Activated B cell treated with CpG ODN at 0.5 μM for 24 hours (primary cell): ENCODE measurements at regions of chr4 and their contacts with region 1.

Region 1: DNA sequence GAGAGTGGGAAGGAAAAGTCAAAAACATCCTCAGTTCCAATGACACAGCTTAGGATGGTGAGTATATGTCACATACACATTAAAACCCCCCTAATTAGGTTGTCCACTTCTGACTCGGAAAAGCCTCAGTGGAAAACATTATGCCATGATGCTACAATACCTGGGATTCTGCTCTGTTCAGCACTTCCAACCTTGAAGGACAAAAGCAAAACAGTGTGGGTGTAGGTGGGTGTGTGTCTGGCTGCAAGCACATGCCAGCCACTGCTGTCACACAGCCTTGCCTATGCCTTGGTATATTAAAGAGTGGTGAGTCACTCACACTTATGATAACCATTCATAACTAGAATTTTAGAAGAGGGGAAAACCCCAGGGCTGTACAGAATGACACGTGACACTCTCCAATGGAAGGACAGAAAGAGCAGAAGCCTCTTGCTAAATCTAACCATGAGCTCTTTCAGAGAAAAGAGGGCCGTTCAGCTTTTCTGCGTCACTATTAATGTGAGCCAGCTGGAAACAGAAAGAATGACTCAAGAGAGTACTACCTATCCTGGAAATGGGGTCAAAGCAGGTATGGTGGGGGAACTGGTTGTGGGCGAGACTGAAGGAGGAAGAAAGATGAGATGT is 159.6 kb downstream of the TET2 start:
- DNase-seq: no peak
- ATAC-seq: peak; percentile 93
- H3K4me3 Mint-ChIP-seq: peak overlapping the region; percentile 74
- H3K27ac Mint-ChIP-seq: peak overlapping the region; percentile 90
- H3K4me1 Mint-ChIP-seq: peaks cover 22% of the 10 kb centered on the region
- H3K27me3 Mint-ChIP-seq: no peaks in the 10 kb centered on the region
- CTCF ChIP-seq: no peak

Region 2: DNA sequence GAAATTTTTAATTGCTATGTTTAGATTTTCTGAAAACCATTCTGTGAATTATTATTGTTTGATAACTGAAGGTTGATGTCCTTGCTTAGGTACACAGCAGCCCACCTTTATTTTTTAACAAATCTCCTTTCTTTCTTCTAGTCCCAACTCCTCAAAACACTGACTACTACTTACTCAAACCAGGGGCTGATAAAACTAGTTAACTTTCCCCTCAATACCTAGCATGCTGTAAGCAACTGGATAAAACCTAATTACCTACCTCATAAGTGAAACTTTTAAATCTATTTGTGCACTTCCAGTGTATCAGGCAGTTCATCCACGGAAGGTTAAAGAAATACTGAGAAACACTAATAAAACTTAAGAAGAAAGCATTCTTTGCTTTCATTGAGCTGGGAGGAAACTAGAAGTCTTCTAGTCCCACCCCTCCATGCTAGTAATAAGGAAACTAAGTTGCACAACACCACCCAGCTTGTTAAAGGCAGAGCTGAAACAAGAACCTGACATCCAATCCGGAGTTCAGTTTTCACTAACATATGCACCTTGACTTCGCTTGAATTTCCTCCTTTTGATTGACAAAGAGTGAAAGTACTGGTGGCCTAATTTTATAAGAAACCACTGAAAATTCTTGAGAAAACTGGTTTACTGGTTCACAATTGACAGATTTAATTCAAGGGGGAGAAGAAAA is 339.8 kb before region 1 on chr4:
- CTCF ChIA-PET with region 1: no interaction called
- POLR2A ChIA-PET with region 1: no interaction called
- intact Hi-C with region 1: loop called (anchors 1 kb)
- DNase-seq: no peak
- ATAC-seq: peak; percentile 97
- H3K4me3 Mint-ChIP-seq: peak overlapping the region; percentile 70
- H3K27ac Mint-ChIP-seq: peak overlapping the region; percentile 86
- H3K4me1 Mint-ChIP-seq: peaks cover 23% of the 10 kb centered on the region
- H3K27me3 Mint-ChIP-seq: peaks cover 4% of the 10 kb centered on the region
- CTCF ChIP-seq: no peak

Region 3: GRCh38 chr4:105191621-105192210 is 114.6 kb before region 1 on chr4:
- CTCF ChIA-PET with region 1: interaction called, 3 read pairs
- POLR2A ChIA-PET with region 1: no interaction called
- intact Hi-C with region 1: loop called (anchors 1 kb)
- DNase-seq: no peak
- ATAC-seq: peak; percentile 73
- H3K4me3 Mint-ChIP-seq: peak overlapping the region; percentile 25
- H3K27ac Mint-ChIP-seq: peak overlapping the region; percentile 77
- H3K4me1 Mint-ChIP-seq: peaks cover 79% of the 10 kb centered on the region
- H3K27me3 Mint-ChIP-seq: no peaks in the 10 kb centered on the region
- CTCF ChIP-seq: no peak